Mammary epithelial cell (primary cell): ENCODE measurements at regions of chr16 and their contacts with region 1.

Region 1: GRCh38 chr16:71610936-71611871 is 14.8 kb upstream of the MARVELD3 start:
- DNase-seq: peak; percentile 37
- H3K4me3 ChIP-seq: peak overlapping the region in 1 of 3 experiments; percentile 11
- H3K27ac ChIP-seq: no peak overlapping the region
- H3K4me1 ChIP-seq: no peaks in the 10 kb centered on the region
- H3K27me3 ChIP-seq: no peaks in the 10 kb centered on the region
- CTCF ChIP-seq: peak; percentile 78 to 91

Region 2: DNA sequence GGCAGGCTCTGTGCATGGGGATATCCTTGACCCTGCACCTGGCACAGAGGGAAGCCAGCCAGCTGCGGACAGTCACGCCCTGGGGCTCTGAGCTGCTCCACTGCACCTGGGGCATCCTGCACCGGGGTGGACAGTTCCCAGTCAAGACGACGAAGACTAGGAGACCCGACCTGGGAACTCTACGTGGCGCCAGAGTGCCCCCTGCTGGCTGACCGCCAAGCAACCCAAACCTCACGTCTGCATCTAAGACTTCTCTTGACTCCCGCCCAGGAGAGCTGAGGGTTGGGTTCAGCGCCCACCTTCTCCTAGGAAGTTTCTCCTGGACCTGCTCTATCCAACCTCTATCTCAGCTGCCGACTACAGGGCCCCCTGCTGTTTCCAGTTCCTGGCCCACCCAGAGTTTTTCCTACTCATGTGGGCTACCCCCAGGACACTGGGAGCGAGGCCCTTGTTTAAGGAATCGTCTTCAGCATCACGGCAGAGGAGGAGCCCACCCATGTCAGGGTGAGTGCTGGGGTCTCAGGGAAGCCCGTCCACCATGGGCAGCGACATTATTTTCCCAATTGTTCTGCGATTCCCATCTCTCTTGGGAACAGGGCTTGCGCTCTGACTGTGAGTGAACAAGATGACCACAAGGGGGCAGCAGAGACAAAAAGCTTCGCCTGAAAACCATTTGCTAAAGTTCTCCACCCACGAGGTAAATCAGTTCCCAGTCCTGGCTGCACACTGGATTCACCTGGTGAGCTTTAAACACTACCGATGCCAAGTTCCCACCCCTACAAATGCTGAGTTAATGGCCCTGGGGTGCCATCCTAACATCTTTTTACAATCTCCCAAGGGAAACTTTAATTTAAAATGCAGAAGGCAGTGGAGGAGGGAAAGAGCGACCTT is 198.7 kb before region 1 on chr16:
- CTCF ChIA-PET with region 1: interaction called, 3 read pairs
- dilution Hi-C with region 1: no loop called
- in situ Hi-C with region 1: no loop called
- intact Hi-C with region 1: loop called (anchors 1 kb)
- DNase-seq: peak; percentile 49
- H3K4me3 ChIP-seq: no peak overlapping the region
- H3K27ac ChIP-seq: no peak overlapping the region
- H3K4me1 ChIP-seq: no peaks in the 10 kb centered on the region
- H3K27me3 ChIP-seq: peaks cover 2% of the 10 kb centered on the region
- CTCF ChIP-seq: peak; percentile 72 to 84

Region 3: DNA sequence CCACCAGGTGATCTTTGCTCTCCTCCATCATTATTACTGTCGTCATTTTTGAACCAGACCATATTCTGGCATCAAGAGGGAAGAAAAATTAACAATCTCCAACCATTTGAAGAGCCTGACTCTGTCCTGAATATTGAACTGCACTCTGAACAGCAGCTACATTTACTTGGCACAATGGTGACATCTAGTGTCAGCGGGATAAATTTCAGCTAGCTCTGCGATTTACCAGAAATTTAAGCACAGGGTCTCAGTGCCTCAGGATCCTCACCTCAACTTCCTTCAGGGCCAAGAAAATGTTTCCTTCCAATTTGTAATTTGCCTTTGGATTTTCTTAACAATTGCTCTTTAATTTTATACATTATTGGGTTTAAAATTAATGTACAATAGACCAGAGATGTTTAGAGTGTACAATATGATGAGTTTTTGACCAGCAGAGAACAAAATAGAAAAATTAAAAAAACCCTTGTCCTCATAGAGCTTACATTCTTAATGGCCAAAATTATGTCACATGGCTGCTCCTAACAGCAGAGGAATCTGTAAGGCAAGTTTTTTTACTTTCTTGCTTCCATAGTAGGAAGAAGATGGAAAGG is 111.3 kb before region 1 on chr16:
- CTCF ChIA-PET with region 1: interaction called, 3 read pairs
- dilution Hi-C with region 1: no loop called
- in situ Hi-C with region 1: no loop called
- intact Hi-C with region 1: loop called (anchors 1 kb)
- DNase-seq: peak; percentile 37
- H3K4me3 ChIP-seq: no peak overlapping the region
- H3K27ac ChIP-seq: no peak overlapping the region
- H3K4me1 ChIP-seq: no peaks in the 10 kb centered on the region
- H3K27me3 ChIP-seq: no peaks in the 10 kb centered on the region
- CTCF ChIP-seq: peak; percentile 72 to 82

Region 4: GRCh38 chr16:71537643-71538042 is 73.6 kb before region 1 on chr16:
- CTCF ChIA-PET with region 1: no interaction called
- dilution Hi-C with region 1: no loop called
- in situ Hi-C with region 1: no loop called
- intact Hi-C with region 1: loop called (anchors 1 kb)
- DNase-seq: peak; percentile 54
- H3K4me3 ChIP-seq: no peak overlapping the region
- H3K27ac ChIP-seq: no peak overlapping the region
- H3K4me1 ChIP-seq: no peaks in the 10 kb centered on the region
- H3K27me3 ChIP-seq: no peaks in the 10 kb centered on the region
- CTCF ChIP-seq: peak; percentile 80 to 83

Region 5: DNA sequence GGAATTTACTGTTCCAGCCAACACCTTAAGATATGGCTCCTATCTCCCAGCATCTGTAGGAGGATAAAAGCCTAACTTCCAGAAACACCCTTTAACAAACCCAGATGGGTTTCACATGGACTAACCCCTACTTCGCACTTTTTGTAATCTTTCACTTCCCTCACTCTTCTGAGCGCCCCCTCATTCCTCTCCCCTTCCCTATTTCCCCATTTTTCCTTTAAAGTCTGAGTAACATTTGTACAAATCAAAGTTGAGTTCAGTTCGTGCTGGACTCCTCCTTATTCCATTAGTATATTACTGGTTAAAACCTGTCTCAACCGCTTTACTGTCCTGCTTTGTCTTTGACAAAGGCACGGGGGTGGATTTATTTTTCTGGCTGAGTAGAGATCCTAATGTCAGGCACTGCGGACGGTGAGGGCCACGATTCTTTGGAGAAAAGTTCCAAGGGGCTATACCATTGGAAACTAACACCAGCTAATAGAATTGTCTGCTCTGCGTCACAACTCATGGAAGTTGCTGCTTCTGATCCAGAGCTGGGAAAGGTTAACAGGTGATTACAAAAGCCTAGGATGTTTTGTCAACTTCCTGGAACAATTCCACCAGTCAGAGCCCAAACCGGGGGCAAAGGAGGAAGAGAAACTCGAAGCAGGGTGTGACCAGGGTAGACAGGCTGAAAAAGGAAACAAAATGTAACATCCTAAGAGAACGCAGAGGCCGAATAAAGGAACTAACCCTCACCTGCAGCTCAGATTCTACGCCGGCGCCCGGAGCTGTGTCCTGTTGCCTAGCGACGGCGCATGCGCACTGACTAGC is 46.8 kb before region 1 on chr16:
- CTCF ChIA-PET with region 1: interaction called, 4 read pairs
- dilution Hi-C with region 1: no loop called
- in situ Hi-C with region 1: no loop called
- intact Hi-C with region 1: loop called (anchors 5 kb)
- DNase-seq: no peak
- H3K4me3 ChIP-seq: peak overlapping the region; percentile 41 to 59 (median 55)
- H3K27ac ChIP-seq: peak overlapping the region; percentile 44
- H3K4me1 ChIP-seq: peaks cover 9% of the 10 kb centered on the region
- H3K27me3 ChIP-seq: no peaks in the 10 kb centered on the region
- CTCF ChIP-seq: no peak

Region 6: GRCh38 chr16:71626018-71626857 is 15.0 kb after region 1 on chr16 and contains the start of gene MARVELD3:
- CTCF ChIA-PET with region 1: interaction called, 20 read pairs
- dilution Hi-C with region 1: no loop called
- in situ Hi-C with region 1: no loop called
- intact Hi-C with region 1: no loop called
- DNase-seq: peak; percentile 71
- H3K4me3 ChIP-seq: peak within 1 kb of the TSS; percentile 92 to 98 (median 98)
- H3K27ac ChIP-seq: peak within 1 kb of the TSS; percentile 49
- H3K4me1 ChIP-seq: peaks cover 5% of the 10 kb centered on the region
- H3K27me3 ChIP-seq: no peaks in the 10 kb centered on the region
- CTCF ChIP-seq: no peak
- total RNA-seq, gene MARVELD3: 7.3 to 13.2 TPM

Region 7: DNA sequence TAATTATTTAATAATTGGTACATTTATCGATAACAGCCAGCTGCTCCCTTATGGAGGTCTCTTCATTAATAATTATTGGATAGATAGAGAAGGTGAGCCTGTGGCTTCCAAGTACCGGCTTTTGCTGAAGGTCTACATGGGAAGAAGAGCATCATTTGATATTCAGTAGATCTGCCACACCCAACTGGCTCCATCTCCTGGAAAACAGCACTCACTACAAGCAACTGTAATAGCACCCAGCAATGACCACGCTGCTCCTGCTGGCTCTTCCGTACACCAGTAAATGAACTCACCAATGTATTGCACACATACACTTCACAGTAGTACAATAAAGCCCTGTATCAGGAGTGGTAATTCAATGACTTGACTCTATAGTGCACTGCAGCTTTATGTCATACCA is 34.2 kb after region 1 on chr16:
- CTCF ChIA-PET with region 1: no interaction called
- dilution Hi-C with region 1: no loop called
- in situ Hi-C with region 1: no loop called
- intact Hi-C with region 1: loop called (anchors 1 kb)
- DNase-seq: peak; percentile 12
- H3K4me3 ChIP-seq: no peak overlapping the region
- H3K27ac ChIP-seq: no peak overlapping the region
- H3K4me1 ChIP-seq: no peaks in the 10 kb centered on the region
- H3K27me3 ChIP-seq: no peaks in the 10 kb centered on the region
- CTCF ChIP-seq: peak; percentile 48 to 60